Esophagus muscularis mucosa (tissue), 4 donors: ENCODE measurements at regions of chr6 and their contacts with region 1.

Region 1: DNA sequence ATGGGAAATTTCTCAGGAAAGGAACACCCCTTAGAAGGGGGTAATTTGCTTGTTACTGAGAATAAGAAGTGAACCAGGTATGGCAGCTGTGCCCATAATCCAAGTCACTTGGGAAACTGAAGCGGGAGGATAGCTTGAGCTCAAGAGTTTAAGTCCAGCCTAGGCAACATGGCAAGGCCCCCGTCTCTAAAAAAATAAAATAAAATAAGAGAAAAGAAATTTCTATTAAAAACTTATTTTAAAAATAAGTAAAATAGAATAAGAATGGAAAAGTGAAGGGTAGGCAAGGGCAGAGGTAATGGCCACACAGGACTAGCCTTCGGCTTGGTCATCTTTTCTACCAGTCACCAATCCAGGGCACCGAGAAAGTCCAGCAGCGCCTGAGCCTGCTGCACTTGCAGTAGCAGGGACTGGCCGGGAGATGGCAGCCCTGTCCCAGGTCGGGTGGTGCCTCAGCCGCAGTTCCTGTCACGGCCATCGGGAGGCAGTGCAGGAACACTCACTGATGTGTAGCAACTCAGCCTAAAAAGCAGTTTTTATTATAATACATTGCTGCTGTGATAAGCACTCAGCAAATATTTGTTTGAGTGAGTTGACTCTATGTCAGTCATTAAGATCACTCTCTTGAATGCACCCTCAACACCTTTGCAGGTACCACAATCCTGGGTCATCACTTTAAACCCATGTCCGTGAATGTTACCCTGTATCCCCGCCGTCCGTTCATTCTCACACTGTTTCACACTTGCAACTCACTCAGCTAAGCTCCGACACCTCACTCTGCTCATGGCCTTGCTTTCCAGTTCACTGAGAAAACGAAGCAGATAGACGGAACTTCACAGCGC is 23.2 kb upstream of the GCM1 start:
- DNase-seq: peak; percentile 97
- H3K4me3 ChIP-seq: no peak overlapping the region
- H3K27ac ChIP-seq: no peak overlapping the region
- H3K4me1 ChIP-seq: peaks cover 0 to 47% (median 41%) of the 10 kb centered on the region in 4 donors
- H3K27me3 ChIP-seq: no peaks in the 10 kb centered on the region
- CTCF ChIP-seq: peak in 2 of 3 experiments; percentile 100
- EP300 ChIP-seq: no peak
- POLR2A ChIP-seq: no peak

Region 2: GRCh38 chr6:53107091-53107490 is 64.7 kb before region 1 on chr6:
- intact Hi-C with region 1: loop called (anchors 5 kb)
- DNase-seq: peak; percentile 79
- H3K4me3 ChIP-seq: no peak overlapping the region
- H3K27ac ChIP-seq: peak overlapping the region in 3 of 4 donors; percentile 2 to 39 (median 12)
- H3K4me1 ChIP-seq: peaks cover 0 to 55% (median 44%) of the 10 kb centered on the region in 4 donors
- H3K27me3 ChIP-seq: no peaks in the 10 kb centered on the region
- CTCF ChIP-seq: no peak
- EP300 ChIP-seq: no peak
- POLR2A ChIP-seq: no peak

Region 3: GRCh38 chr6:53359072-53359842 is 187.4 kb after region 1 on chr6:
- intact Hi-C with region 1: loop called (anchors 5 kb)
- DNase-seq: peak; percentile 98
- H3K4me3 ChIP-seq: peak overlapping the region; percentile 65 to 78 (median 68)
- H3K27ac ChIP-seq: peak overlapping the region; percentile 92 to 95 (median 93)
- H3K4me1 ChIP-seq: peaks cover 11 to 19% (median 17%) of the 10 kb centered on the region in 4 donors
- H3K27me3 ChIP-seq: no peaks in the 10 kb centered on the region
- CTCF ChIP-seq: no peak
- EP300 ChIP-seq: no peak
- POLR2A ChIP-seq: peak; percentile 64

Region 4: DNA sequence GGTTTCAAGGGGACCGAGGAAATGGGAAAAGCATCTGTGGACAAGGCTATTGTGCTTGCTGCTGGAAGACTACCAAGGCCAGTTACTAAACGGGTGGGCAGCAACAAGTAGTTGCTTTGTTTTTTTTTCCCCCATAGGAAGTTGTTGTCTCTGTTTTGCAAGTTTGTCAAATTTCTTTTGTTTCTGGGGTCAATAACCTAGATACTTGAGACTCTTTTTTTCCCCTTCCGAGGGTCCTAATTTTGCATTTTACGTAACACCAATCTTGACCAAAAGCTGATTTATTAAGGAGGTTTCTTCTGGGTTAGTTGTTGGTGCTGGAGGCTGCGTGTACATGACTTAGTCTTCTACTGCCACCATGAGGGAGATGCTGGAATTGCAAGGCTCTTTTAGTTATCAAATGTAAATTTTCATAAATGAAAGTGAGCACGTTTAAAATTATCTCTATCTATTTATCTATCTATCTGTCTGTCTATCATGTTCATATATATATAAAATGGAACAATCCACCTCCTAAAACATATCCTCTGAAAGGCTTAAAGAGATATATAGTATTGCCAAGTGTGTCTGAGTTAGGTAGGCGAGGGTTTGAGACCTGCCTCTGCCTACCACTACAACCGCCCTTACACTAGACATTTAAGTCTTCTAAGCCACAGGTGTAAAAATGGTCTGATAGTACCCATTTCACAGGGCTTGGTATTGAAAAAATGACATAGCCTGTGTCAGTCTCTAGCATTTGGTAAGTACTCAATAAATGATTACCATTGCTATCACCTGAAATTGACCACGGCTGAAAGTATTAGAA is 312.9 kb after region 1 on chr6:
- intact Hi-C with region 1: loop called (anchors 1 kb)
- DNase-seq: no peak
- H3K4me3 ChIP-seq: no peak overlapping the region
- H3K27ac ChIP-seq: peak overlapping the region in 2 of 4 donors; percentile 0 to 58
- H3K4me1 ChIP-seq: peaks cover 6 to 19% (median 17%) of the 10 kb centered on the region in 4 donors
- H3K27me3 ChIP-seq: no peaks in the 10 kb centered on the region
- CTCF ChIP-seq: peak in 2 of 3 experiments; percentile 97 to 98
- EP300 ChIP-seq: no peak
- POLR2A ChIP-seq: no peak

Region 5: GRCh38 chr6:53651764-53652401 is 480.1 kb after region 1 on chr6:
- intact Hi-C with region 1: loop called (anchors 10 kb)
- DNase-seq: no peak
- H3K4me3 ChIP-seq: peak overlapping the region; percentile 58 to 73 (median 60)
- H3K27ac ChIP-seq: peak overlapping the region in 3 of 4 donors; percentile 11 to 68 (median 40)
- H3K4me1 ChIP-seq: peaks cover 25 to 33% (median 29%) of the 10 kb centered on the region in 4 donors
- H3K27me3 ChIP-seq: no peaks in the 10 kb centered on the region
- CTCF ChIP-seq: peak; percentile 36 to 43 (median 39)
- EP300 ChIP-seq: no peak
- POLR2A ChIP-seq: no peak

Region 6: GRCh38 chr6:53725791-53726431 is 554.1 kb after region 1 on chr6:
- intact Hi-C with region 1: loop called (anchors 2 kb)
- DNase-seq: no peak
- H3K4me3 ChIP-seq: no peak overlapping the region
- H3K27ac ChIP-seq: no peak overlapping the region
- H3K4me1 ChIP-seq: peaks cover 2 to 36% (median 33%) of the 10 kb centered on the region in 4 donors
- H3K27me3 ChIP-seq: no peaks in the 10 kb centered on the region
- CTCF ChIP-seq: peak; percentile 90 to 99 (median 93)
- EP300 ChIP-seq: no peak
- POLR2A ChIP-seq: no peak